ENCODE measurements at regions of chr14 and their contacts with region 1.

Region 1: DNA sequence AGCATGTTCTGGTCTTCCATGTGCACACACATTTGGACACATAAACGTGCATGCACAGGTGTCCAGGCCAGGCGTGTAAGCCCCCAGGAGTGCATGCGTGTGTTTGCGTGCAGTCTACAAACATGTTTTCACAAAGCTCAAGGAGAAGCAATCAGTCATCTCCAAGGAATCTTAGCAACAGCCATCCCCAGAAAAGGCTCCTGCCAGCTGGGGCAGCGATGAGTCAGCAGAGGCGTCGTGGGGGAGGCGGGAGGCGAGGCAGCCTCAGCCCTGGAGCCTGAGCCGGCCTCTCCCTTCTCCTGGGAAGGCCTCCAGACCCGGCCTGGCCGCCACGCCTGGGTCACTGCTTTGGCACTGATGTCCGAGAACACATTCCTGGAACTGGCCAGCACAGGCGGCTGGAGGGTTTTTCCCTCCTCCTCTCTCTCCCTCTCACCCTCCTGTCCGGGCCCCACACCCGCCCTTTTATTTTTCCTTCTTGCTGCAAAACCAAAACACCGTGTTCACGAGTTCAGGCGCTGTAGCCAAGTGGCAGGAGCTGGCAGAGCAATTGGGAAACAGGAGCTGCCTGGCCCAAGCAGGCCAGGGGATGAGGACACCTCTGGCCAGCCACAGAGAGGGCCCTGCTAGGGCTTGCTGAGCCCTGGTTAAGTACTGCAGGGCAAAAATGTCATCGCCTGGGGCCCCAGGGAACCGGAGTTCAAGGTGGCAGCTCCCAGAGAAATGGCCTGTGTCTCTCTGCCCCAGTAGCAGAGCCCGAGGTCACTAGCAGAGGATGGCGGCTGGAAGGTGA is 92.7 kb downstream of the LRRC74A start:
- DNase-seq: no peak
- H3K4me3 Mint-ChIP-seq: no peak overlapping the region
- H3K27ac Mint-ChIP-seq: no peak overlapping the region
- H3K4me1 Mint-ChIP-seq: peaks cover 53% of the 10 kb centered on the region
- H3K27me3 Mint-ChIP-seq: peaks cover 5% of the 10 kb centered on the region

Region 2: DNA sequence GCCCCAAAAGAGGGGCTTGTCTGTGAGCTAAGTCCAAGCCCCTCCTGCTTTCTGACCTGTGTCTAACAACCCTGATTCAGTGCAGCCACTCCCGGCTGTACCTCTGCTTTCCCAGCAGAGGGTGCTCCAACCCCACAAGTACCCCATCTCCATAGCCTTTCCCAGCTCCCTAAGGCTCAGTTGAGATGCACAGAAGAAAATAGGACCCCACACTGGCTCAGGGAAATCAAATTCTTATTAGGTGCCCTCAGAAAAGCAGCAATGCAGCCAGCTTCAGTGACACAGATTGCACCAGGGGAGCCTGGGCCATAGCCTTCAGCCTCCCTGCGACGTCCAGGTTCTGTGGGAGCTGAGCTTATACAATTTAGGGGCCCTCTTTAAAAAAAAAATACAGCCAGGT is 42.9 kb before region 1 on chr14:
- CTCF ChIA-PET with region 1: interaction called, 63 read pairs
- POLR2A ChIA-PET with region 1: no interaction called
- DNase-seq: peak; percentile 57
- H3K4me3 Mint-ChIP-seq: no peak overlapping the region
- H3K27ac Mint-ChIP-seq: no peak overlapping the region
- H3K4me1 Mint-ChIP-seq: no peaks in the 10 kb centered on the region
- H3K27me3 Mint-ChIP-seq: peaks cover 4% of the 10 kb centered on the region

Region 3: GRCh38 chr14:76947078-76947837 is 28.3 kb after region 1 on chr14:
- CTCF ChIA-PET with region 1: interaction called, 16 read pairs
- POLR2A ChIA-PET with region 1: no interaction called
- DNase-seq: peak; percentile 82
- H3K4me3 Mint-ChIP-seq: no peak overlapping the region
- H3K27ac Mint-ChIP-seq: peak overlapping the region; percentile 54
- H3K4me1 Mint-ChIP-seq: peaks cover 53% of the 10 kb centered on the region
- H3K27me3 Mint-ChIP-seq: no peaks in the 10 kb centered on the region

Region 4: GRCh38 chr14:77023001-77023996 is 104.4 kb after region 1 on chr14:
- CTCF ChIA-PET with region 1: interaction called, 11 read pairs
- POLR2A ChIA-PET with region 1: interaction called, 12 read pairs
- DNase-seq: peak; percentile 38
- H3K4me3 Mint-ChIP-seq: peak overlapping the region; percentile 61
- H3K27ac Mint-ChIP-seq: peak overlapping the region; percentile 84
- H3K4me1 Mint-ChIP-seq: peaks cover 46% of the 10 kb centered on the region
- H3K27me3 Mint-ChIP-seq: no peaks in the 10 kb centered on the region

Region 5: DNA sequence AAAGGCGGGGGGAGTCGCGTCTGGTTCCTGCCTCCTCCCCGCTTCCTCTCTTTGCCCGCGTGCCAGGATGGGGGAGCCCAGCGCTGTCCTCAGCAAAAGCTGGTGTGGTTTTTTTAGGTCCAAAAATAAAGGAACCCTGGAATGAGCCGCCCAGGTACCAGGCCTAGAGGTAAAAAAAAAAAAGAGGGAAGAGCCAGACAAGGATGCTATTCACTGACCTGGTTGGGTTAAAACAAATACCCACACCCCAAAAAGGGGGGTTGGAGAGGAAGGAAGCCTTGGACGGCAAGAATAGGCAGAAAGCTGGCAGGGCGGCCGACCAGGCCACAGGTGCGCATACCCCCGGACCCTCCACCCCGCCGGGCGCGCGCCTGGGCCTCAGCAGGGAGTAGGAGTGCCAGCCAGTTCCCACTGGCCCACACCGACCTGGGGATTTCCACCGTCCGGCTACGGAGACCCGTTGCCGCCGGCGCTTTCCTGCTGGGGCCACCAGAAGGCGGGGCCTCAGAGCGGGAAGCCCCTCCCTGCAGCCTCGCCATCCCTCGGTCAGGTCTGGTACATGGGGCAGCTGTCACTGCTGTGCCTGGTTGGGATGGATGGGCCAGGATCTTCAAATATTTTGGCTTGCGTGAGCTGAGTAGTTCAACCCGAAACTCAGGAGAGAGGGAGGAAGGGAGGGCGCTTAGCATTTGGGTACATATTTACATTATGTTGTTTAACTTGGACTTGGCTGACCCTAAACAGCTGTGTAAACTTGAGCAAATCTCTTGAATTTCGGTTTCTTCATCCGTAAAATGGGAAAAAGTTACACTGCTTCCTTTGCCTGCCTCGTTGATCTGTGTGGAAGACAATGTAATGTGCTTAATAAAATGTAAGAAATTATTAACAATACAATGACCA is 114.9 kb after region 1 on chr14:
- CTCF ChIA-PET with region 1: interaction called, 10 read pairs
- POLR2A ChIA-PET with region 1: interaction called, 5 read pairs
- DNase-seq: peak; percentile 83
- H3K4me3 Mint-ChIP-seq: peak overlapping the region; percentile 85
- H3K27ac Mint-ChIP-seq: peak overlapping the region; percentile 94
- H3K4me1 Mint-ChIP-seq: peaks cover 79% of the 10 kb centered on the region
- H3K27me3 Mint-ChIP-seq: no peaks in the 10 kb centered on the region

Region 6: DNA sequence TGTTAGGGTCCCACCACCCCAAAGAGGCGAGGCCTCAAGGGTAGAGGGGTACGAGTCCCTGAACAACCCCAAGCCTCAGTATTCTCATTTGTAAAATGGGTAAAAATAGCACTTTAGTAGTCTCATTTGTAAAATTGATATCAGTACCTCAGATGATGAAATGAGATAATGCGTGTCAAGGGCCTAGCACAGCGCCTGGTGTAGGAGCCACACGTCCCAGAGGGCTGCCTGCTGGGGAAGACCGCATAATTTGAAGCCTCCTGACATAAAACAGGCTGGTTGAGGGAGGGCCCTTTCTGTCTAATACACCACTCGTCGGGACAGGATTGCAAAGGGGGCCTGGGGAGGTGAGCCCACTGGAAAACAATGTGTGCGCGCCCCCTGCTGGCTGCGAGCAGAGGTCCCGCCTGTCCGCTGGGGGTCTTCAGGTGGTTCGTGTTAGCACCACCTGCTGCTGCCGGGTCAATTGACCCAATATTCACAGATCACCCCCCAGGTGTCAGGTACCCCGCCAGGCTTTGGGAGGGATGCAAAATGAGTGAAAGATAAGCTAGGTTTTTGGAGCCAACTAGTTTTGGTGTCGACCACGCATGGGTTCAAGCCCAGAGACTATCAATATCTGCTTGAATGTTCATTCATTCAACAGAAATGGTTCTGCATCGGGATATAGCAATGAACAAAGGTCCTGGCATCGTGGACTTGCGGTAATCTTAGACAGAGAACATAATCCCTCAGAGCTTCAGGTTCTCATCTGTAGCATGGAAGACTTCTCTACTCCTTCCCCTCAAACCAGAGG is 134.3 kb after region 1 on chr14:
- CTCF ChIA-PET with region 1: interaction called, 104 read pairs
- POLR2A ChIA-PET with region 1: interaction called, 6 read pairs
- DNase-seq: peak; percentile 71
- H3K4me3 Mint-ChIP-seq: no peak overlapping the region
- H3K27ac Mint-ChIP-seq: no peak overlapping the region
- H3K4me1 Mint-ChIP-seq: peaks cover 24% of the 10 kb centered on the region
- H3K27me3 Mint-ChIP-seq: peaks cover 2% of the 10 kb centered on the region

Measured in activated CD4-positive, alpha-beta memory T cell treated with anti-CD3 and anti-CD28 coated beads, Interleukin-2, amount 10 ng/mL, durations not matched to agents 7 days and 5 days (primary cell).